Gastrocnemius medialis (tissue), 4 donors: ENCODE measurements at regions of chr16 and their contacts with region 1.

Region 1: GRCh38 chr16:30893744-30894539 is at the start of gene BCL7C:
- DNase-seq: peak; percentile 89
- ATAC-seq: peak; percentile 59 to 67
- H3K4me3 ChIP-seq: peak within 1 kb of the TSS; percentile 71 to 81 (median 80)
- H3K27ac ChIP-seq: peak within 1 kb of the TSS; percentile 93 to 100 (median 96)
- H3K4me1 ChIP-seq: peaks cover 34 to 39% of the 10 kb centered on the region in 2 donors
- H3K27me3 ChIP-seq: no peaks in the 10 kb centered on the region
- CTCF ChIP-seq: peak; percentile 31 to 71 (median 45)
- POLR2A ChIP-seq: peak; percentile 35 to 57
- total RNA-seq, gene BCL7C: 16.4 to 24.5 (median 22.3) TPM

Region 2: DNA sequence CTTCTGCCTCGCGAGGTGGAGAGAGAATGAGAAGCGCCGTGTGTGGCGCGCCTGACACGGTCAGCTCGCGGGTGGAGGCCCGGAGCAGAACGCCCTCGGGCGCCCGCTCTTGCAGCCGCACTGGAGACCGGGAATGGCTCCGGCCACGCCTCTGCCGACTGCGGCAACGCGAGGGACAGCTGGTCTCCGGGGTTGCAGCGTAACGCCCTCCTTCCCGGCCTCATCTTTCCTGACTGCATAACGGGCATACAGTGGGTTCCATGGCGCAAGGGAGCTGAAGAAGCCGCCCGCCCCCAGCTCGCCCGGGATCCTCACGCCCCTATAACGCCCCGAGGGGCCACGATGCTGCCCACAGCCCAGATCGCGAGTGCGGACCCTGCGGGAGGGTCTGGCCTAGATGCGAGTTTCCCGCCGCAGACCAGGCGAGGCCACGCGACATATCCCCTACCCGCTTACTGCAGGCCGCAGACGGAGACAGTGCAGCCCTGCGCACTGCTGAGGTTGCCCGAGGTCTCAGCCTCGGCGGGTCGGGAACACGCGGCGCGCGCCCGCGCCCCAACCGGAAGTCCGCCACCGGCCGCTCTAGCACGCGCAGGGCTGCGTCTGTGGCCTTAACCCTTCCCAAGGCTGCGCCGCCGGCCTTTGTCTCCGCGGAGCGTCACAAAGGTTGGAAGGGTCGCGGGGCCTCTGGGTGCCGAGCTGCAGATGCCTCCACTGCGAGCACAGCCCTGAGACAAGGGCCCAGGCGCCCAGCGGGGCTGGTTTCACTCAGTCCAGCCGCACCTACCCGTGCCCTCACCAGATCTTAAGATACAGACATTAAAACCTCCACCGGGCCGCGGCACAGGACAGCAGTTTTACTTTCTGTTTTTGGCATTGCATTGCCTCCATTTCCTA is 18.9 kb before region 1 on chr16:
- in situ Hi-C with region 1: no loop called
- intact Hi-C with region 1: loop called (anchors 1 kb)
- DNase-seq: peak; percentile 77 to 84
- ATAC-seq: peak; percentile 99
- H3K4me3 ChIP-seq: peak overlapping the region; percentile 84 to 97 (median 94)
- H3K27ac ChIP-seq: peak overlapping the region; percentile 86 to 96 (median 87)
- H3K4me1 ChIP-seq: peaks cover 17 to 22% of the 10 kb centered on the region in 2 donors
- H3K27me3 ChIP-seq: no peaks in the 10 kb centered on the region
- CTCF ChIP-seq: peak in 1 of 5 experiments; percentile 6
- POLR2A ChIP-seq: peak; percentile 65 to 69

Region 3: DNA sequence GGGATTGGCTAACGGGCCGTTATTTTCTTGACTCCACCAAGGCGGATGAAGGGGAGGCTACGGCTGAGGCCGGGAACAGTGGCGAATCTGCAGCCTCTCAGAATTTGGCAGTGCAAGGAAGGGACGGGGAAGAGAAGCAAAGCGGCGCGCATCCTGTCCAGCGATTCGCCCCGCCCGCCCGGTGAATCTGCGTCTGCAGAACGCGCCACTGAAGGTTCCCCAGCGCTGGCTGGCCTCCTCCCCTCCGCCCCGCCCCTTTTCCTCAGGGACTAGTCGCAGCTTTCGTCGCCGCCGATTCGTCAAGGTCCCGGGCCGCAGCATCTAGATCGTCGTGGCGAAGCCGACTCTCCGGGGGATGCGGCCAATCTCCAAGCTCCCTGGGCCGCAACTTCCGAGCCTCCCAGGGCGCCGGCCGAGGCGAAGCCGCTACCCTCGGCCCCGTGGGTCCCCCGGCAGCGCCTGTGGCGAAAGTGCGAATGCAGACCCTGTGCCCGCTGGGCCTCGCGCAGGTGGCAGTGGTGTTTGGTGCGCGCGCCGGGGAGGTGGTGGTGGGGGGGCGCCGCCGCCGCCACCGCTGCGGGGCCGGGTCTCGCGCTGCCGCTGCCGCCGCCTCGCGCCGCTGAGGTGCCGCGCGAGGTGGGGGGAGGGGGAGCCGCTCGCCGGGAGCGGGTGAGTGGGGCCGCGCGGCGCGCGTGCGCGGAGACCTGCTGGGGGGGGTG is 63.7 kb after region 1 on chr16 and contains the start of gene SETD1A:
- in situ Hi-C with region 1: no loop called
- intact Hi-C with region 1: loop called (anchors 2 kb)
- DNase-seq: peak; percentile 95
- ATAC-seq: peak; percentile 92 to 93
- H3K4me3 ChIP-seq: peak within 1 kb of the TSS; percentile 70 to 94 (median 84)
- H3K27ac ChIP-seq: peak within 1 kb of the TSS; percentile 97 to 99 (median 98)
- H3K4me1 ChIP-seq: peaks cover 11 to 17% of the 10 kb centered on the region in 2 donors
- H3K27me3 ChIP-seq: no peaks in the 10 kb centered on the region
- CTCF ChIP-seq: peak in 2 of 5 experiments; percentile 22 to 41
- POLR2A ChIP-seq: peak; percentile 66 to 75
- total RNA-seq, gene SETD1A: 3.8 to 15.4 (median 9.8) TPM

Region 4: GRCh38 chr16:31052124-31052523 is 158.2 kb after region 1 on chr16:
- in situ Hi-C with region 1: no loop called
- intact Hi-C with region 1: no loop called
- DNase-seq: no peak
- ATAC-seq: peak in 1 of 2 donors; percentile 55
- H3K4me3 ChIP-seq: no peak overlapping the region
- H3K27ac ChIP-seq: no peak overlapping the region
- H3K4me1 ChIP-seq: no peaks in the 10 kb centered on the region
- H3K27me3 ChIP-seq: no peaks in the 10 kb centered on the region
- CTCF ChIP-seq: no peak
- POLR2A ChIP-seq: no peak